CD14-positive monocyte (primary cell): ENCODE measurements at regions of chr21 and their contacts with region 1.

Region 1: DNA sequence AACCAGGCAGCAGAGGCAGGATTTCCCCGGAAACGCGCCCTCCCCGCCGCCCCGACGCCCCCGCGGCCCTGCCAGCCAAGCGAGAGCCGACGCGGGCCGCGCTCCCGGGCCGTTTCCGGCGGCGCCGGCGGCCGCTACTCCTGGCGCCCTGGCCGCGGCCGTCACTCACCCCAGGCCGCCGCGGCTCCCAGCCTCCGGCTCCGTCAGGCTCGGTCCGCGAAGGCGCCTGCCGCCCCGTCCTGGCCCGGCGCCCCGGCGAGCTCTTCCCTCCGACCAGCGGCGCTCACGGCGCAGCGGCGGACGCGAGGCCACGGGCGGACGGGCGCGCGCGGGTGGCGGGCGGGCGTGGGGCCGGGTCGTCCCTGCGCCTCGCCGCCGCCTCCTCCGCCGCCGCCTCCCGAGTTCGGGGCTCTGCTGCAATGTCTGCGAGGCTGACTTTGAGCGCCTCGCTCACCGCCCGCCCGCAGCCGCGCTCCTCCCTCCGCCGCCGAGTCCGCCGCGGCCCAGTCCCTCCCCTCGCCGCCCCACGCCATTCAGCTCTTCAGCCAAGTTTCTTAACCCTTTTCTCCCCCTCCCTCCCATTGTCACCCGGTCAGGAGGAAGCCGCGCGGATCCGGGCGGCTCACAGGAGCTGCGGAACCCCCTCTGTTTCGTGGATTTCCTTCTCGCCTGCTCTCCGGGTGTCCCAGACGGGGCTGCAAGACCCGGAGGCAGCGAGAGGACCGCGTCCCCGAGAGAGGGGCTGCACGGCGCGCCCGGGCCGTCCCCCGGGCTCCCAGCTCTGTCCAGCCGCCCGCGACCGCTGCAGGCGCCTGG is at the start of gene NRIP1:
- DNase-seq: peak; percentile 81 to 89 (median 86)
- H3K4me3 ChIP-seq: peak within 1 kb of the TSS; percentile 73 to 97 (median 91)
- H3K4me3 Mint-ChIP-seq: peak within 1 kb of the TSS; percentile 98
- H3K27ac ChIP-seq: peak within 1 kb of the TSS; percentile 90
- H3K27ac Mint-ChIP-seq: peak within 1 kb of the TSS; percentile 96 to 99 (median 97)
- H3K4me1 ChIP-seq: peaks cover 29 to 48% of the 10 kb centered on the region in 2 donors
- H3K4me1 Mint-ChIP-seq: peaks cover 43% of the 10 kb centered on the region
- H3K27me3 ChIP-seq: no peaks in the 10 kb centered on the region
- H3K27me3 Mint-ChIP-seq: no peaks in the 10 kb centered on the region
- CTCF ChIP-seq: no peak
- polyA plus RNA-seq, gene NRIP1: 4.3 to 28.2 (median 23.5) TPM

Region 2: DNA sequence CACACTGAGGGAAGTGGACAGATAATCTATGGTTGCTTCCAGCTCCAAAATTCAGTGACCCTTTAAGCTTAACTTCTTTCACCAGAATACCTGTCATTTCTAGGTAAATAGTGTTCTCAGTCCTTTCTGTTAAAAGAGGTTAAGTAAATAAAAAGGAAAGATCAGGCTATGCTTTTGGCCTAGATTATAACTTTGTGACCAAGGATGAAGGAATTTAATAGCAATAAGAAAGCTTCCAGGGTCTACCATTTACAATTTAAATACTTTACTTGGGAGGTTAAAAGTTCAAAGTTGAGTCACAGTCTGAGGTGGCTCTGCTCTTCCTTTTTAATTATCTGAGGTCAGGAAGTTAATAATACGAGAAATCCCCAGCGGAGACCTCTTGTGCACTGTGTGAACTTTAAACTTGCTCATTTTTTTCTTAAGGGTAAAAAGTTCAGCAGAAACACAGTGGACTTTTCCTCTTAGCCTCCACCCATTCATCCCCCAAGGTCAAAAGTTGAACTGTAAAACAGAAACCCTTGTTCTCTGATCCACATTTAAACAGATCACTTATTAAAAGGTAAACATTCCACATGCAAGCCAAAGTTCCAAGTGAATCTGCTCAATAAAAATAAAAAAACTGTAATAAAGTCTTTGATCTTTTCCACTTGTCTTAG is 187.1 kb before region 1 on chr21:
- intact Hi-C with region 1: loop called in 1 of 2 experiments (anchors 5 kb)
- DNase-seq: peak; percentile 69 to 88 (median 77)
- H3K4me3 ChIP-seq: peak overlapping the region in 1 of 3 experiments; percentile 4
- H3K4me3 Mint-ChIP-seq: peak overlapping the region in 1 of 2 donors; percentile 29
- H3K27ac ChIP-seq: no peak overlapping the region
- H3K27ac Mint-ChIP-seq: peak overlapping the region in 5 of 7 donors; percentile 61 to 88 (median 70)
- H3K4me1 ChIP-seq: peaks cover 33 to 38% of the 10 kb centered on the region in 2 donors
- H3K4me1 Mint-ChIP-seq: peaks cover 41% of the 10 kb centered on the region
- H3K27me3 ChIP-seq: no peaks in the 10 kb centered on the region
- H3K27me3 Mint-ChIP-seq: peaks cover 0 to 3% (median 2%) of the 10 kb centered on the region in 3 donors
- CTCF ChIP-seq: no peak

Region 3: DNA sequence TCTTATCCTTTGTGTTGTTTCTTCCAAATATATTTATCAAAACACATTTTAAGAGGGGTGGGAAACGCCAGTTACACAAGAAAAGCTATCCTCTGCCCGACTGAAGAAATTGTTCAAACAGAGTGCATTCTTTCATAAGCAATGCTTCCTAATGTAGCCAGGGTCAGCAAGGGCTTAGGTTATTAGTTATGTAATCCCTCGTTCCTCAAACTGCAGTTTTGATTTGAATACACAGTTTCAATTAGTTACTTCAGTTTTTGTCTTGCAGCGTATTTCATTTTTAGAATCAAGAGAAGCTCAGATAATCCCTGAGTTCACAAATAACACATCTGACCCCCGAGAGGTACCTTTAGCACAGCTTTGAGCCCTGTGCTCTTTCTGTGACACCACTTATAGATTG is 141.7 kb after region 1 on chr21:
- intact Hi-C with region 1: loop called in 1 of 2 experiments (anchors 5 kb)
- DNase-seq: peak; percentile 55 to 85 (median 74)
- H3K4me3 ChIP-seq: peak overlapping the region in 2 of 3 experiments; percentile 37 to 63
- H3K4me3 Mint-ChIP-seq: peak overlapping the region; percentile 48 to 86
- H3K27ac ChIP-seq: peak overlapping the region; percentile 39 to 77
- H3K27ac Mint-ChIP-seq: peak overlapping the region; percentile 94 to 96 (median 95)
- H3K4me1 ChIP-seq: peaks cover 70 to 79% of the 10 kb centered on the region in 2 donors
- H3K4me1 Mint-ChIP-seq: peaks cover 76% of the 10 kb centered on the region
- H3K27me3 ChIP-seq: no peaks in the 10 kb centered on the region
- H3K27me3 Mint-ChIP-seq: peaks cover 0 to 2% (median 0%) of the 10 kb centered on the region in 3 donors
- CTCF ChIP-seq: no peak

Region 4: DNA sequence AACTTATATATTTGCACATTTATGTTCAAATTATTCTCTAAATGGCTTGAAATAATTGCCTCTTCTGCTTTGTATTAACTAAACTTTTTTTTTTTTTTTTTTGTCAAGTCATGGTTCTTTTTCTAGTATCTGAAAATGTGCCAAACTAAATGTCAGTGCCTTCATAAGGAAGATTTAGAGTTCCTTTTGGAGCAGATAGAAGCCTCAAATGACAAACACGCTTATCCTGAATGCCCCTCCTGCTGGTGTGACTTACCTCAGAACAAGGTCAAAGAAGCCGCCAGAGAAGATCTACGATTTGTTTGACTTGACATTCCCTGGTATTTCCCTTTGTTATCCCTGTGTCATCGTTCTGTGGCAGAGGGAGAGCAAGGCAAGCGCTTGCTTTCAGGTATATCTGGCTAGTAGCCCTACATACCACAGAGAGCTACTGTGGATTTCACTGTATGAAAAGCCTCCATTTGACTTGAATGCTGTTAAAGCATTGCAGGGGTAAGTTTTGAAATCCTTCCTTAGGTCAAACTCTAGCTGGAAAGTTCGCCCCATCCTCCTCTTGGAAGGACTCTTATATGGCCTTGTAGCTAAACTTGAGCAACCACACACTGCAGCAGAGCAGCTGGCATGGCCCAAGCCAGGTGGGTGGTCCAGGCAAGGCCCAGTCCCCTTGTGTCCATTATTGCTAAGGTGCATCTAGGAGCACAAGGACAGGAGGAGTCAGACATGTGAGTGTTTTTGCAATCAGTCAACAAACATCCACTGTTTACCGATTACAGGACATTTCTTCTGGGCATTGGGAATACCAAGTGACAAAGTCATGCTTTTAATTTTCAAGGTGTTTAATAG is 379.6 kb after region 1 on chr21:
- intact Hi-C with region 1: loop called in 1 of 2 experiments (anchors 5 kb)
- DNase-seq: peak in 1 of 3 donors; percentile 22
- H3K4me3 ChIP-seq: peak overlapping the region in 1 of 3 experiments; percentile 49
- H3K4me3 Mint-ChIP-seq: peak overlapping the region in 1 of 2 donors; percentile 47
- H3K27ac ChIP-seq: peak overlapping the region; percentile 53 to 78
- H3K27ac Mint-ChIP-seq: peak overlapping the region; percentile 87 to 99 (median 98)
- H3K4me1 ChIP-seq: peaks cover 46 to 49% of the 10 kb centered on the region in 2 donors
- H3K4me1 Mint-ChIP-seq: peaks cover 49% of the 10 kb centered on the region
- H3K27me3 ChIP-seq: no peaks in the 10 kb centered on the region
- H3K27me3 Mint-ChIP-seq: peaks cover 0 to 2% (median 0%) of the 10 kb centered on the region in 3 donors
- CTCF ChIP-seq: no peak